Activated CD8-positive, alpha-beta T cell treated with anti-CD3 and anti-CD28 coated beads for 36 hours (primary cell): ENCODE measurements at regions of chr11 and their contacts with region 1.

Region 1: GRCh38 chr11:123020968-123021367 is 39.3 kb upstream of the BSX start:
- DNase-seq: peak; percentile 52
- ATAC-seq: peak; percentile 86
- H3K4me3 Mint-ChIP-seq: no peak overlapping the region
- H3K27ac Mint-ChIP-seq: no peak overlapping the region
- H3K4me1 Mint-ChIP-seq: peaks cover 8% of the 10 kb centered on the region
- H3K27me3 Mint-ChIP-seq: peaks cover 3% of the 10 kb centered on the region
- CTCF ChIP-seq: peak; percentile 61

Region 2: DNA sequence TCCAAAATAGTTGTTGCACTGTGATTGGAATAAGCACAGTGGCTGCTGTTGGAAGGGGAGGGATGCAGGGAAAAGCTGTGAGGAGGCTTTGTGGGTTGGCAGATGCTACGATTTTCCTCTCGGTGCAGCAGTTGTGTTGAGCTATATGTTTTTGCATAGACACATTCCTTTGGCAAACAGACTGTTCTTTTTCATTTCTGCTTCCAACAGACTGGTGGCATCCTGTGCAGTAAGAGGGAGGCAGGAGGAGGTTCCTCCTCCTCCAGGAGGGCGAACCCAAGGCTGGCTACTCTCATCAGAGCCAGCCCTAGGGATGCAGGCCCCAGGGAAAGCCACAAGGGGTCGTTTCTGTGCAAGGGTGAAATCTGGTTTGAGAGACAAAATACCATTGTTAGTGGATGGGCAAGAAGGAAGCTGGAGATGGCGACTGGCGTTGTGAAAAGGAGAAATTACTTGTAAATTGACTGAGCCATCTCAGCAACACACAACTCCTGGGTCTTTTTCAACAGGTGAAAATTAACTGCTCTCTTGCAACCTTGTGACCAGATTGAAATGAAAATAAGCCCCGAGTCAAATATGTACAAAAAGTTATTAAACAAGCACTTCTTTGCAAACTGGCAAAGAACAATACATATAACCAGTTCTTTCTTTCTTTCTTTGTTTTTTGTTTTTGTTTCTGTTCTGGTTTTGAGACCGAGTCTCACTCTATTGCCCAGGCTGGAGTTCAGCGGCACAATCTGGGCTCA is 392.0 kb before region 1 on chr11:
- CTCF ChIA-PET with region 1: interaction called, 10 read pairs
- POLR2A ChIA-PET with region 1: no interaction called
- intact Hi-C with region 1: loop called (anchors 10 kb)
- DNase-seq: peak; percentile 83
- ATAC-seq: peak; percentile 96
- H3K4me3 Mint-ChIP-seq: no peak overlapping the region
- H3K27ac Mint-ChIP-seq: no peak overlapping the region
- H3K4me1 Mint-ChIP-seq: peaks cover 14% of the 10 kb centered on the region
- H3K27me3 Mint-ChIP-seq: no peaks in the 10 kb centered on the region
- CTCF ChIP-seq: peak; percentile 86

Region 3: GRCh38 chr11:122869622-122870021 is 151.3 kb before region 1 on chr11:
- CTCF ChIA-PET with region 1: interaction called, 127 read pairs
- POLR2A ChIA-PET with region 1: interaction called, 4 read pairs
- intact Hi-C with region 1: loop called (anchors 5 kb)
- DNase-seq: no peak
- ATAC-seq: no peak
- H3K4me3 Mint-ChIP-seq: no peak overlapping the region
- H3K27ac Mint-ChIP-seq: peak overlapping the region; percentile 71
- H3K4me1 Mint-ChIP-seq: peaks cover 12% of the 10 kb centered on the region
- H3K27me3 Mint-ChIP-seq: no peaks in the 10 kb centered on the region
- CTCF ChIP-seq: no peak

Region 4: DNA sequence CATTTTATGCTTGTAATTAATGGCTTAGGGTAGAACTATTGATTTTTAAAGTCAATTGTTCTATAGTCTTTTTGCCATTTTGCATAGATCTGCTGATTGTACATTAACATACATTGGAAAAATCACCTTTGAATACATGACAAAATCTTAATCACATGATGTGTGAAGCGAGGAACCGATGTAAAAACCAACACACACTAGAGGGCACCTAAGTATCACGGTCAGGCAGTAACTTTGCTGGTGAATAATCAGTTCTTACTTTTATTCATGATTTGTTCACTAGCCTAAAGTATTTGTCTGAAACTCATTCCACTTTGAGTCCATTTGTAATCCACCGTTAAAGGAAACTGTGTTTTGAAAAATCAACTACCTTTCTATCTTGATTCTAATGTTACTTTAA is 110.2 kb before region 1 on chr11:
- CTCF ChIA-PET with region 1: interaction called, 15 read pairs
- POLR2A ChIA-PET with region 1: no interaction called
- intact Hi-C with region 1: no loop called
- DNase-seq: peak; percentile 27
- ATAC-seq: no peak
- H3K4me3 Mint-ChIP-seq: no peak overlapping the region
- H3K27ac Mint-ChIP-seq: no peak overlapping the region
- H3K4me1 Mint-ChIP-seq: no peaks in the 10 kb centered on the region
- H3K27me3 Mint-ChIP-seq: no peaks in the 10 kb centered on the region
- CTCF ChIP-seq: peak; percentile 41

Region 5: GRCh38 chr11:123033895-123034294 is 12.9 kb after region 1 on chr11:
- CTCF ChIA-PET with region 1: interaction called, 79 read pairs
- POLR2A ChIA-PET with region 1: no interaction called
- intact Hi-C with region 1: no loop called
- DNase-seq: no peak
- ATAC-seq: no peak
- H3K4me3 Mint-ChIP-seq: no peak overlapping the region
- H3K27ac Mint-ChIP-seq: no peak overlapping the region
- H3K4me1 Mint-ChIP-seq: peaks cover 3% of the 10 kb centered on the region
- H3K27me3 Mint-ChIP-seq: peaks cover 1% of the 10 kb centered on the region
- CTCF ChIP-seq: no peak